ENCODE measurements at regions of chr12 and their contacts with region 1.

Region 1: DNA sequence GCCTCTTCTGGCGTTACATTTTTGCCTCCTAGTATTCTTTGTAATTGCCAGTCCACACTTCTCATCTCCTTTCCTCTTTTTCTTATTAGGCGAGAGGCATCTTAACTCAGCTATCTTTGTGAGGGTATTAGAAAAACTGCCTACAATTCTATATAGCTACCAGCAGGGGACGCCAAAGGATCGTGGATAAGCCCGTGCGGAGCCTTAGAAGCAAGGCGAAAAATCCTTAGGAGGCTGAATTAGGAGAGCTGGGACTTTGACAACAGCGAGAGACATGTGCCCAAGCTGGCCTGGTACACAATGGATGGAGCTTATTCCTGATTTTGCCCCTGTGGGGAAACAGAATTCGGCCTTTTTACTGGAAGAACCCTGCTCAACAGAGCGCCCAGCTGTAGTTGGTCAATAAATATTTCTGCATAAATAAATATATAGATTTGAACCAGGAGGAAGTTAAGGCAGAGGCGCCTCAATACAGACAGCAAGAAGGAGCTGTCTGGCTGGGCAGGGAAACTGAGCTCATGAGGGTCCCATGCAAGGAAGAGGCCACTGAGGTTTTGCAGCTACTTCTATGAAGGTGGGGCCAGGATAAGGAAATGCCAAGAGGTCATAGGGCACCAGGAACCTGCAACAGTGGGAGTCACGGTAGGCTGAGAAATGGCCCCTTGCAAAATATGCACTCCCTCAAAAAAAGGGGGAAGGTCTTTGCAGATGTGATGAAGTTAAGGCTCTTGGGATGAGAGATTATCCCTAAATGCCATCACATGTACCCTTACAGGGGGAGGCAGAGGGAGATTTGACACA is 14.6 kb upstream of the RBM19 start:
- DNase-seq: peak; percentile 58
- H3K4me3 Mint-ChIP-seq: no peak overlapping the region
- H3K27ac Mint-ChIP-seq: no peak overlapping the region
- H3K4me1 Mint-ChIP-seq: no peaks in the 10 kb centered on the region
- H3K27me3 Mint-ChIP-seq: peaks cover 67% of the 10 kb centered on the region
- CTCF ChIP-seq: peak; percentile 86

Region 2: GRCh38 chr12:113965951-113966797 is 14.6 kb before region 1 on chr12 and contains the start of gene RBM19:
- CTCF ChIA-PET with region 1: interaction called, 10 read pairs
- intact Hi-C with region 1: no loop called
- DNase-seq: peak; percentile 98
- H3K4me3 Mint-ChIP-seq: peak within 1 kb of the TSS; percentile 90
- H3K27ac Mint-ChIP-seq: peak within 1 kb of the TSS; percentile 92
- H3K4me1 Mint-ChIP-seq: peaks cover 25% of the 10 kb centered on the region
- H3K27me3 Mint-ChIP-seq: peaks cover 32% of the 10 kb centered on the region
- CTCF ChIP-seq: peak; percentile 85
- total RNA-seq, gene RBM19: 47.2 and 47.8 TPM in 2 replicates

Region 3: GRCh38 chr12:114508529-114509129 is 527.9 kb after region 1 on chr12:
- CTCF ChIA-PET with region 1: interaction called, 21 read pairs
- intact Hi-C with region 1: loop called (anchors 1 kb)
- DNase-seq: peak; percentile 53
- H3K4me3 Mint-ChIP-seq: no peak overlapping the region
- H3K27ac Mint-ChIP-seq: no peak overlapping the region
- H3K4me1 Mint-ChIP-seq: no peaks in the 10 kb centered on the region
- H3K27me3 Mint-ChIP-seq: no peaks in the 10 kb centered on the region
- CTCF ChIP-seq: peak; percentile 45

Region 4: DNA sequence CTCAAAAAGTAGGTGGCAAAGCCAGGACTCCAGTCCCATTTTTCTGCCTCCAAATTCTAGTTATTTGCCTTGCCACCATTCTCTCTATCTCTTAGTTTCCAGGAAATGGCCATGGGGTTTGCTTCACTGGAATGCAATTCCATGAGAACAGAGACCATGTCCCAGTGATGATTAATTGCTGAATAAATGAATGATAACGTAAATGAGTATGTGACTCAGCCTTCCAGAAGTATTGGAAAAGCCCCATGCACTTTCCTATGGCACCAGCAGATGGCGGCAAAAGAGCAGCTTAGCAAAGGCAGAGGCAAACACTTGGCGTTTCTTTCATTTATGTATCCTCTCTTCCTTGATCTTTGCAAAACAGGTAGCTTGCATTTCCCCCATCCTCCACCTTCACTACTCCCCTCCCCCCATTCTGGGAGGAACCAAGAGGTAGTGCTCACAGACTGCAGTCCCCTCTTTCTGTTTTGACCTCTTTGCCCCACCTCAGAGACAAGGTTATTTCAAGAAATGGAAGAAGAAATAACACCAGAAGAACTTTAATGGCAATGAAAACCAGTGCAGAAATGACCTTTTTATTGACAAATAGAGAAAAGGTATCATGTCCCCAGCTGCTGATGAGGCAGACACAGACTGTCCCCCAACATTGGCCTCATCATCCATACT is 681.9 kb after region 1 on chr12:
- CTCF ChIA-PET with region 1: no interaction called
- intact Hi-C with region 1: loop called (anchors 1 kb)
- DNase-seq: peak; percentile 83
- H3K4me3 Mint-ChIP-seq: no peak overlapping the region
- H3K27ac Mint-ChIP-seq: no peak overlapping the region
- H3K4me1 Mint-ChIP-seq: peaks cover 3% of the 10 kb centered on the region
- H3K27me3 Mint-ChIP-seq: peaks cover under 1% of the 10 kb centered on the region
- CTCF ChIP-seq: peak; percentile 92

Region 5: DNA sequence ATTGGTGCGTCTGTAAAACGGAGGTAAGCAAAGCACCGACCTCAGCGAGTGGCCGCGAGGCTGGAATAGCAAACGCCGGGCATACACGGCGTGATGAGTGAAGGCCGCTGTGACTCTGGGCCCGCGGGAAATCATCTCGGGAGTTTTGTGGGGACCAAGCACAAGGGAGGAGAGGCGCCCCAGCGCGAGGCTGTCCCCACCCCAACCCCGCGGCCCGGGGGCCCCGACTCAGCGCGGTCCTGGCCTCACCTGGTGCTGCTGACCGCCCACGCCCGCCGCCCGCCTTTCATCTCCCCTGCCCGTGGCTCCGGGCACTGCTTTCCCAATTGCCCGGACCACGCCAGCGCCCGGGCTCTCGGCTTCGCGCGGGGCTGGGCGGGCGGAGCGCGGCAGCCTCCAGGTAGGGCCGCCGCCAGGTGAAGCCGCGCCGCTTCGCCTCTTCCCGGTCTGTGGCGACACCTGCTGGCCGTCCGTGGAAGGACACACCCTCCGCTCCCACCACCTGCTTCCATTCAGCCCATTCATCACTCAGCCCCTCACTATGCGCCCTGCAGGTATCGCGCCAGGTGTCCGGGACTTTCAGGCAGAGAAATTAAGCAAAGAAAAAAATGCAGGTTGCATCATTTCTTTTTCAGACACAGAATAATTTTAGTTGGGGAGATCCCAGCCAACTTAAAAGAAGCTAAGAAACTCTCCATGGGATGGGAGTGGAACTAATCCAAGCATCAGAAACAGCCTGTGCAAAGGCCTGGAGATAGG is 1936.4 kb after region 1 on chr12:
- CTCF ChIA-PET with region 1: no interaction called
- intact Hi-C with region 1: loop called (anchors 1 kb)
- DNase-seq: peak; percentile 91
- H3K4me3 Mint-ChIP-seq: peak overlapping the region; percentile 60
- H3K27ac Mint-ChIP-seq: no peak overlapping the region
- H3K4me1 Mint-ChIP-seq: no peaks in the 10 kb centered on the region
- H3K27me3 Mint-ChIP-seq: peaks cover 80% of the 10 kb centered on the region
- CTCF ChIP-seq: peak; percentile 98

Measured in Calu3 (cell line).